Ascending aorta (tissue), 2 donors: ENCODE measurements at regions of chr12 and their contacts with region 1.

Region 1: DNA sequence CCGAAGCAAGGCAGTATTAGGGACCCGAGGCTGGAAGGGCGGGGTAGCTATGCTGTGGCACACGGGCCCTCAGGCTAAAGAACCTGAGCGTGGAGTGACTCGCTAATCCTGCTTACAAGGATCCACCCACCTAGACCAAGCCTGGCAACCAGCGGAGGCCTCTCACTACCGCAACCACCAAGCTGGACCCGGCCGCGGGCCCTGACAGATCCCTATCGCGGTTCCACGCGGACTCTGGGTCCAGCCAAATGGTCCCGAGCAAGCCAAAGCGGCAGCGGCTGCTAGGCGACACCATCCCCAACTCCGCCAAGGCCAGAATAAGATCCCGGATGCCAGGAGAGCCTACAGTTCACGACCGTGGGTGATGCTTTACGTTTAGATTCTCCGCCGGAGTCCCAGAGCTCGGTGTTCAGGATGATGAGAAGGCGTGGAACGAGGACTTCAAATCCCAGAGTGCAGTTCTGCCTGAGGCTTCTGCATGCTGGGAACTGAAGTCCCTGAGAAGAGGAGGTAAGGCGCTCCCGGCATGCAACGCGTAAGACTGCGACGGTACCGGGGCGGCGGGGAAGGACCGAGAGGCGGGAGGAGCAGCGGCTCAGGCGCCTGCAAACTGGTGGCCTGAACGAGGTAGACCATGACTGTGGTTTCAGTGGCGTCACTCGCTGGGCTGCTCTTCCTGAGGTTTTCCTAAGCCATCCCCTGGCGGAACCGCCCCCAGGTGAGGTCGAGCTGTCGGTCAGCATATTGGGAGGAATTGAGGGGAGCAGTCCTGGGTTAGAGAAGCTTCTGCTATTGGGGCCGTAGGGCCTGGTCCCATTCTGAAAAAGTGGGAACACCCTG is at the starts of genes CEP290 and TMTC3:
- DNase-seq: peak; percentile 97 to 99
- H3K4me3 ChIP-seq: peak within 1 kb of the TSS; percentile 77 to 83
- H3K27ac ChIP-seq: peak within 1 kb of the TSS; percentile 64 to 78
- H3K4me1 ChIP-seq: peaks cover 0 to 6% of the 10 kb centered on the region in 2 donors
- H3K27me3 ChIP-seq: no peaks in the 10 kb centered on the region
- CTCF ChIP-seq: no peak
- total RNA-seq, gene CEP290: 7.2 TPM
- total RNA-seq, gene TMTC3: 14.5 TPM

Region 2: GRCh38 chr12:88035271-88035906 is 106.6 kb before region 1 on chr12:
- intact Hi-C with region 1: loop called (anchors 2 kb)
- DNase-seq: peak; percentile 60 to 95
- H3K4me3 ChIP-seq: peak overlapping the region; percentile 58 to 79
- H3K27ac ChIP-seq: peak overlapping the region; percentile 56 to 68
- H3K4me1 ChIP-seq: peaks cover 2 to 13% of the 10 kb centered on the region in 2 donors
- H3K27me3 ChIP-seq: no peaks in the 10 kb centered on the region
- CTCF ChIP-seq: no peak